ENCODE measurements at regions of chr2 and their contacts with region 1.

Region 1: DNA sequence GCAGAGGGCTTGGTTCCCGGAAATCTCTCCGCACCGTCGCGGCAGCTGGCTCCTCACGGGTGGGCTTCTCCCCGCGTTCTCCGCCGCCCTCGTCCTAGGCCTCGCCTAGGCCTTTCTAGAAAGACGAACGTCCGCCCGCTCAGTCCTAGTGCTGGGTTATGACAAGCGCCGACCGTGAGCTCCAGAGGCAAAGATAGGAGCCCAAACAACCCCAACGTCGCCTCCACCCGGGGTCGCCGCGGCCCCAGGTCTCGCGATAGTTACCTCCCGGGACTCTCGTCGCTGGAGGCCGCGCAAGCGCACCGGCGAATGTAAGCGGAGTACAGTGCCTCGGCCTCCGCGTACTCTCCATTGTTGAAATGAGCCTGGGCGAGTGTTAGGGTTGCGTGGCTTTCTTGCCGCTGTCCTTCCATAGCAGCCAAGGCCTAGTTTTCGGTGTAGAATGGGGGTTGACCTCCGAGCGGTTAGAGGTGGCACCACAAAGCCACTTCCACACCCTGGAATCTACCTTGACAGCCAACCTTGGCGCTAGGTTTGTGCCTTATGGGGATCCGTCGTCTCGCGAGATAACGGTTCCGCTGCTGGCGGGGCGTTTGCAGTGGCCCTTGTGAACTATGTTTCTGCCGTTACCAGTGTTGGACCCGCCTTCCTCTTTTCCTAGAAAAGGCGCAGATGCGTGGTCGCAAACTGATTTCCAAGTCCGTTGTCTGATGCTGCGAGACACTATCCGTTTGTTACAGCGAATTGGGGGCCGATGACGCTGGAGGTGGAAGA is at the start of gene TTC32:
- DNase-seq: peak; percentile 88 to 99 (median 94)
- ATAC-seq: peak; percentile 86 to 87
- H3K4me3 Mint-ChIP-seq: peak within 1 kb of the TSS; percentile 93 to 99 (median 96)
- H3K27ac Mint-ChIP-seq: peak within 1 kb of the TSS; percentile 94 to 100 (median 99)
- H3K4me1 Mint-ChIP-seq: peaks cover 17 to 43% (median 30%) of the 10 kb centered on the region in 4 donors
- H3K27me3 Mint-ChIP-seq: peaks cover 0 to 8% (median 0%) of the 10 kb centered on the region in 5 donors
- polyA plus RNA-seq, gene TTC32: 21.9 to 37.0 (median 31.0) TPM

Region 2: DNA sequence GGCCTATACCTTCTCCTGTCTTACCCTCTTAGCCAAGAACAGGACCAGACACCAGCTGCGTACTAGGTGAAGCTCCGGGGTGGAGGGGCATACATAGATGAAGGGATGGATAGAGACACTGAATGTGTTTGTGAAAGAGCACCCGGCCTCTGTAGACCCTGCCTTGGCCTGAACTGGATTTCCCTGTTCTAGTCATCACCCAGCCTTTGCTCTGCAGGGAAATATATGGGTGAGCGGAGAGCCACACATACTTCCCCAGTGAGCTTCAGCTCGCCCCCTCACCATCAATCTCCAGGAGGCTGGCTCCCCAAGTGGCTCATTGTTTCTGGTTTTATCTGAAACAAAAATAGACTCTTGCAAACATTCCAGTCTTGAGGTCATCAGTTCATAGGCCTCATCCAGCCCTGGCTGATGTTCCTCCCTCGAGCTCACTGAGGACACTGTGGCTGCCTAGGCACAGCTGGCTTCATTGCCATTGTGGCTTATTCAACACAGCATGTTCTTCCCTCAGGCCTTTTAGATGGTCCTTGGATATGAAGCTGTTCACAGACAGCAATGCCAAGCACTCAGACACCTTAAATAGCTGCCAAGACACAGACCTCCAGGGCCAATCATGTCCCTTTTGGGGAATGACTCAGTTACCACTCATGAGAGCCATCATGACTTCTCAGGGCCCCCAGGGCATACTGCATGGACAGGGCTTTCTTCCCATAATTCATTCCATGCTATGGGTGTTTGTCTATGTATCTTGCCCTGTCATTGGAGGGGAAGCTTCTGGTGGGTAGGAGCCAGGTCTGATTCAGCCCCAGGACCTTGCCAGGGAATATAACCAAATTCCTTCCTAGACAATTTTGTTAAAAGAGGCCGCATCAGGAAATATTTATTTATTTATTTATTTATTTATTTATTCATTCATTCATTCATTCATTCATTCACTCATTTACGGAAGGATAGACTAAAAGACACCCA is 82.2 kb before region 1 on chr2:
- POLR2A ChIA-PET with region 1: no interaction called
- DNase-seq: no peak
- ATAC-seq: no peak
- H3K4me3 Mint-ChIP-seq: no peak overlapping the region
- H3K27ac Mint-ChIP-seq: no peak overlapping the region
- H3K4me1 Mint-ChIP-seq: no peaks in the 10 kb centered on the region
- H3K27me3 Mint-ChIP-seq: peaks cover 6 to 19% (median 14%) of the 10 kb centered on the region in 5 donors

Region 3: DNA sequence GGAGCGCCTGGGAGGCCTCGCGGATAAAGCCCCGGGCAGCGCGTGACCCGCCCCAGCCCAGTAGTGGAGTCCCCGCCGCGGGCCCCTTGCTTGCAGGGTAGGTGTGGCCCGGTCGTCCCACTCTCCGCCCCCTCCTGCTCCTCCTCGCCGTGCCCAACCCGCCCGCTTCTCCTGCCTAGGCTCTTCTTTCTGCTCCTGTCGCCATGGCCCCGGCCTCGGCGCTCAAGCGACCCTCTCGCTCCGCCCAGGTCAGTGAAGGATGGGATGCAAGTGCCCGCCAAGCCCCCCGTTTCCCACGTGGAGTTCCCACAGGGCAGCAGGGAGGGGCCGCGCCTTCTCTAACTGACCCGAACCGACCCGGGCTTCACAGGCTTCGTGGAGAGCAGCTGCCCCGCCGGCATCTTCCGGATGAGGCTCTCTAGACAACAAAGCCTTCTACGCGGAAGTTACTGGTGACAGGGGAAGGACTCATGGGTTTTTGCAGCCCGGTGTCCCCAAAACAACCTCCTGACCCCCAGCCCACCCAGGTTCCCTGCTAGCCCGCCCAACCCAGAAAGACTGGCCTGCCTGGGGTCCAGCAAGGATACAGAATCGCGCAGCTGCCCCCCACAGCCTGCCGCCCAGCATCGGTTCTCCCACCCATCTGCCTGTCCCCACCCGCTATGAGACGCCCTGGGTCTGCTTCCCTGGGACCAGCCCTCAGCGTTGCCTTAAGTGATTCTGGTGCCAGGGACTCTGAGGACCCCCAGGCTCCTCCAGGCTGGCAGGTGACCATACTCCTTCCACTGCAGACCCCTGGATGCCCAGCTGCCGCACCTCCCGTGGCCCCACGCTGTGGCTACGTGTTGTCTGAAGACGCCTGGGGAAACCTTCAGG is 32.7 kb before region 1 on chr2:
- POLR2A ChIA-PET with region 1: interaction called, 32 read pairs
- DNase-seq: peak; percentile 52 to 83 (median 67)
- ATAC-seq: peak; percentile 94 to 96
- H3K4me3 Mint-ChIP-seq: peak overlapping the region; percentile 95 to 99 (median 98)
- H3K27ac Mint-ChIP-seq: peak overlapping the region; percentile 95 to 99 (median 98)
- H3K4me1 Mint-ChIP-seq: peaks cover 22 to 56% (median 36%) of the 10 kb centered on the region in 4 donors
- H3K27me3 Mint-ChIP-seq: peaks cover 0 to 4% (median 0%) of the 10 kb centered on the region in 5 donors

Region 4: GRCh38 chr2:19989681-19990415 is 88.2 kb after region 1 on chr2 and contains the start of gene WDR35:
- POLR2A ChIA-PET with region 1: interaction called, 10 read pairs
- DNase-seq: peak; percentile 79 to 93 (median 89)
- ATAC-seq: peak; percentile 92 to 93
- H3K4me3 Mint-ChIP-seq: peak within 1 kb of the TSS; percentile 85 to 94 (median 91)
- H3K27ac Mint-ChIP-seq: peak within 1 kb of the TSS; percentile 79 to 97 (median 95)
- H3K4me1 Mint-ChIP-seq: peaks cover 13 to 30% (median 22%) of the 10 kb centered on the region in 4 donors
- H3K27me3 Mint-ChIP-seq: peaks cover 7 to 23% (median 10%) of the 10 kb centered on the region in 5 donors
- polyA plus RNA-seq, gene WDR35: 0.91 to 1.8 (median 1.7) TPM